Esophagus muscularis mucosa (tissue), 4 donors: ENCODE measurements at regions of chr4 and their contacts with region 1.

Region 1: GRCh38 chr4:10582059-10582686 is 102.4 kb downstream of the CLNK start:
- DNase-seq: no peak
- H3K4me3 ChIP-seq: no peak overlapping the region
- H3K27ac ChIP-seq: no peak overlapping the region
- H3K4me1 ChIP-seq: peaks cover 0 to 12% (median 6%) of the 10 kb centered on the region in 4 donors
- H3K27me3 ChIP-seq: no peaks in the 10 kb centered on the region
- CTCF ChIP-seq: peak; percentile 71 to 83 (median 76)
- EP300 ChIP-seq: no peak
- POLR2A ChIP-seq: no peak

Region 2: DNA sequence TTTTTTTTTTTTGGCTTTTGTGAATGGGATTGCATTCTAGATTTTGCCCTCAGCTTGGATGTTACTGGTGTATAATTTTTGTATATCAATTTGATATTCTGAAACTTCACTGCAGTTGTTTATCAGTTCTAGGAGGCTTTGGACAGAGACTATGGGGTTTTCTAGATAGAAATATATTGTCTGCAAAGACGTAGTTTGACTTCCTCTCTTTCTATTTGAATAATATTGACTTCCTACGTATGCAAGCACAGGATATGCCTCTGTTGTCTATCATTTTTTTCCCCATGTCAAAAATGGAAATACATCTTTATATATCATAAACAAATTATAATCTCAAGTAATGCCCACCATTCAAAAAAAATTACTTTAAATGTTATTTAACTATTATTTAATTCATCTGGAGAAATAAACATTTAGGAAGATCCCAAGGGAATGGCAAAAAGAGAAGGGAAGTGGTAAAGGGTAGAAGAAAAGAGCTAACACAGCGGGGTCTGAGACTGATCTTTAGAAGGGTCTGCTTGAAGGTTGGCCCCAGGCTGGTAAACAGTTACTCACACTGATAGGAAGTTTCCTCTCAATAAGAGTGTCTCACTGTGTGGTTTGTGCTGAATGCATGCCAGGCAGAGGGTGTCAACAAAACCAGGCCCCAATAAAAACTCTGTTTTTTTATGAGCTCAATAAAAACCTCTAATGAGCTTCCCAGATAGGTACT is 160.7 kb before region 1 on chr4:
- intact Hi-C with region 1: no loop called
- DNase-seq: no peak
- H3K4me3 ChIP-seq: no peak overlapping the region
- H3K27ac ChIP-seq: no peak overlapping the region
- H3K4me1 ChIP-seq: no peaks in the 10 kb centered on the region
- H3K27me3 ChIP-seq: no peaks in the 10 kb centered on the region
- CTCF ChIP-seq: no peak
- EP300 ChIP-seq: no peak
- POLR2A ChIP-seq: no peak

Region 3: DNA sequence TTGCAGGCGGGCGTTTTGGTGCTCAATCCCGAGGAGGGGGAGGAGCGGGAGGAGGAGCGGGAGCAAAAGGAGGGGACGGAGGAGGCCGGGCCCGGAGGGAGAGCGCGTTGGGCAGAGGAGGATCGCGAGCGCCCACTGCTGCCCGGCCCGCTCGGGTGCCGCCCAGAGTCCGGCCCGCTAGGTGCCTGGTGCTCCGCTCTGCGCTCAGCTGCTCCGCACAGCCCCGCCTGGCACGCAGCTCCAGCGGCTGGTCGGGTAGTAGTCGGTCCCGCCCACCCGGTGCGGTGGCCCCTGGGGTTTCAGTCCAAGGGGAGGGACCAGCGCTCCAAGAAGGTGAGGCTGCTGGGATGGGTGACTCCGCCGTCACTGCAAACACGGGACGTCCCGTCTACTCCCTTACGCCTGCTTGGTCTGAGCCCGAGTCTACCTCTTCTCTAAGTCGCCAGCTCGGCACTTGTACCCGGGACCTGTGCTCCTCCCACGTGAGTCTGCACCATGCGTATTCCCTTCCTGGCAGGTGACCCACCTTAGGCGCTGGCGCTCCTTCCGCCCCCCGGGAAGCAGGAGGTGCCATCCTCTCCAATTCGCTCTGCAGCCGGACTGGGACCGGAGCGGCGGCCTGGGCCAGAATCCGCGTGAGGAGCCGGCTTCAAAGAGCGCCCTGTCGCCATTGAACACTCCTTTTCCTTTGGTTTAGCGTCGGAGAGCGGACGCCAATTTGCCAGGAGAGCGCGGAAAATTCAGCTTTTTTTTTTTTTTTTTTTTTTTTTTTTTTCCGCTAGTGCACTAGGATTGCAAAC is 846.9 kb after region 1 on chr4:
- intact Hi-C with region 1: loop called (anchors 10 kb)
- DNase-seq: peak; percentile 92
- H3K4me3 ChIP-seq: peak overlapping the region; percentile 58 to 64 (median 61)
- H3K27ac ChIP-seq: peak overlapping the region; percentile 30 to 64 (median 46)
- H3K4me1 ChIP-seq: peaks cover 3 to 32% (median 28%) of the 10 kb centered on the region in 4 donors
- H3K27me3 ChIP-seq: peaks cover 0 to 28% (median 2%) of the 10 kb centered on the region in 4 donors
- CTCF ChIP-seq: peak; percentile 39 to 65 (median 50)
- EP300 ChIP-seq: no peak
- POLR2A ChIP-seq: peak; percentile 9

Region 4: GRCh38 chr4:11720292-11720691 is 1138.1 kb after region 1 on chr4:
- intact Hi-C with region 1: loop called (anchors 10 kb)
- DNase-seq: no peak
- H3K4me3 ChIP-seq: no peak overlapping the region
- H3K27ac ChIP-seq: no peak overlapping the region
- H3K4me1 ChIP-seq: no peaks in the 10 kb centered on the region
- H3K27me3 ChIP-seq: no peaks in the 10 kb centered on the region
- CTCF ChIP-seq: peak; percentile 39 to 63 (median 51)
- EP300 ChIP-seq: no peak
- POLR2A ChIP-seq: no peak